CD8-positive, alpha-beta T cell (primary cell): ENCODE measurements at regions of chr11 and their contacts with region 1.

Region 1: GRCh38 chr11:86021377-86021776 is 47.5 kb downstream of the PICALM start:
- DNase-seq: peak in 1 of 9 experiments; percentile 32
- ATAC-seq: no peak
- H3K4me3 ChIP-seq: no peak overlapping the region
- H3K4me3 Mint-ChIP-seq: no peak overlapping the region
- H3K27ac ChIP-seq: peak overlapping the region in 1 of 2 experiments; percentile 18
- H3K27ac Mint-ChIP-seq: peak overlapping the region; percentile 49
- H3K4me1 ChIP-seq: no peaks in the 10 kb centered on the region
- H3K4me1 Mint-ChIP-seq: peaks cover 34% of the 10 kb centered on the region
- H3K27me3 ChIP-seq: no peaks in the 10 kb centered on the region
- H3K27me3 Mint-ChIP-seq: no peaks in the 10 kb centered on the region
- CTCF ChIP-seq: no peak

Region 2: DNA sequence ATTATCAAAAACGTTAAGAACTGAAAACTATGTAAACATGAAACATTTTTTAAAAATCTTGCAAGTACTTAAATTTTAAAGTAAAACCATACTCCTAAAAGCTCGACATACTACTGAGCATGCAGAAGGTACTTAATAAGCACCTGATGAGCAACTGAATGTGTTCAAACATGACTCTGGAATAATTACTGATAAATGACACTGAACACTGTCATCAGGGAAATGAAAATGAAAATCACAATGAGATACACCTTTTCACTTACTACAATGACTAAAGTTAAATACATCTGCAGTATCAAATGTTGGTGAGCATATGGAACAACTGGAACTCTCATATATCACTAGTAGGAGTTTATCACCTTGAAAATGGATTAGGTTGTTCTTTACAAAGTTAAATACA is 17.7 kb before region 1 on chr11:
- CTCF ChIA-PET with region 1: interaction called, 3 read pairs
- POLR2A ChIA-PET with region 1: interaction called, 3 read pairs
- intact Hi-C with region 1: loop called in 1 of 2 experiments (anchors 2 kb)
- DNase-seq: no peak
- ATAC-seq: no peak
- H3K4me3 ChIP-seq: no peak overlapping the region
- H3K4me3 Mint-ChIP-seq: no peak overlapping the region
- H3K27ac ChIP-seq: no peak overlapping the region
- H3K27ac Mint-ChIP-seq: no peak overlapping the region
- H3K4me1 ChIP-seq: no peaks in the 10 kb centered on the region
- H3K4me1 Mint-ChIP-seq: no peaks in the 10 kb centered on the region
- H3K27me3 ChIP-seq: no peaks in the 10 kb centered on the region
- H3K27me3 Mint-ChIP-seq: no peaks in the 10 kb centered on the region
- CTCF ChIP-seq: no peak